ENCODE measurements at regions of chr7 and their contacts with region 1.

Region 1: DNA sequence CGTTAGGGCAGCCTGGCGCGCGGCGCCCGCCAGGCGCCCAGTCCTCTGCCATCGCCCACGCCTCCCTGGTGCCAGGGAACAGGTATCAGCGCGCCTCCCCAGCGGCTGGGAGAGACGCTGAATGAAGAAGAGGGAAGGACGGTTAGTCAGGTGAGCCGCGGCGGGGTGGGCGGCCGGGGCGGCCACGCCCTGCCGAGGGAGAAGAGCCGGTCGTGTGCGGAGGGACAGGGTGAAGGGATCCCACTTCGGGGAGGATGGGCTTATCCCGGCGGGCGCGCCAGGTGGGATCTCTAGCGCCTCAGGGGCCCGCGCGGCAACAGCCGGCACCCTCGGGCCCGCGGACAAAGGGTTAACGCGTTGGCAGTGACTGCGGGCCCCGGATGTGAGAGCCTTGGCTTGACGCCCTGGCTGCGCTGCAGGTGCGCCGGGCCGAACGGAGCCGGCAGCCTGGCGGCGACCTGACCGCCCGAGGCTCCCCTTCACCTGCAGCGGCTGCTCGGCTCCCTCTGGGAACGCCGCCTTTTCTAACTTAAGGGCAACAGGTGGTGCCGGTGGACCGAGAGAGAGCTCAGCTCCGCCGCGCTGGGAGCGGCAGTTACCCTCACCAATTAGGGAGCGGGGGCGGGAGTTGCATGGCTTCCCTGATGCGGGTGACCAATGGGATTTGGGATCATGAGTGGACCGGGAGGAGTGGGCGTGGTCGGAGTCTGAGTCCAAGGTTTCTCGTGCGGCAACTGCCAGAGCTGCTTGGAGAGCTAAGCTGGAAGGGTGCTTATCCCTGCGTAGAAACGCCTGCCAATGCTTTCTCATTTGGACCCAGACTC is at the start of gene ARL4A:
- DNase-seq: peak; percentile 92 to 99
- H3K4me3 ChIP-seq: peak within 1 kb of the TSS; percentile 96 to 99
- H3K27ac ChIP-seq: peak within 1 kb of the TSS; percentile 83 to 92
- H3K4me1 ChIP-seq: peaks cover 0 to 3% of the 10 kb centered on the region in 2 donors
- H3K27me3 ChIP-seq: no peaks in the 10 kb centered on the region
- CTCF ChIP-seq: peak; percentile 21 to 57 (median 47)
- total RNA-seq, gene ARL4A: 55.5 TPM

Region 2: GRCh38 chr7:12211054-12211710 is 475.9 kb before region 1 on chr7 and contains the start of gene TMEM106B:
- intact Hi-C with region 1: loop called (anchors 2 kb)
- DNase-seq: peak; percentile 86 to 98
- H3K4me3 ChIP-seq: peak within 1 kb of the TSS; percentile 73 to 88
- H3K27ac ChIP-seq: peak within 1 kb of the TSS; percentile 84 to 90
- H3K4me1 ChIP-seq: peaks cover 0 to 10% of the 10 kb centered on the region in 2 donors
- H3K27me3 ChIP-seq: no peaks in the 10 kb centered on the region
- CTCF ChIP-seq: no peak
- total RNA-seq, gene TMEM106B: 21.3 TPM

Region 3: DNA sequence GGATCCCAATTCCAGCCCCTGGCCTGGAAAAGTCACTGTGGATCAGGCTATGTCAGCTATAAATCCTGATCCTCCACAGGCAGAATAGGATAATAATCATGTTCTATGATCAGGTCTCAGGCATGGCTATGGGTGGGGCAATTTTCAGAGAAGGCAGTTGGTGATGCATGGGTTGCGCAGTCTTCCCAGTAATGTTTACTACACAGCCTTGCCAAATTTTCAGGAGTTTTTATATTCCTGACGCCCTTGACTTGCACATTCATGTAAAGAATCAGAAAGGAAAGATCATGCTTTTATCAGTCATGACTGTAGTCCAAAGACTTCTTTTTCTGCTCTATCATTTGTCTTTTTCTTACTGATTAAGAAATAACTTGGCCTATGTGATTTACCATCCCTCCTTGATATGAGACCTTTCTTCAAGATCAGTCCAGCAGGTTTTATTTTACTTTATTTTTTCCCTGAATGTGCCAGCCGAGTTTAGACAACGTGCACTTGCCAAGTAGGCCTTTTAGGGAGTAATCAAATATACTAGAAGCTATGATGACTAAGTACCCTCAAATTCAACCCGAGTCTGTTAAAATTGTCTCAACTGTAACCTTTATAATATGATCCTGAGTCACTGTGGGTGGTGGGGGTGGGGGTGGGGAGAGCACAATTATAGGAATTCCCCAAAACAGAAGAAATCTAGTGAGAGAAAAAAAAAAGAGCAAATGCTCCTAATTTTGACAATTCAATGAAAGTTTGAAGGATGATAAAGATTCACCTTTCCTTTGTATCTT is 32.2 kb after region 1 on chr7:
- intact Hi-C with region 1: loop called (anchors 2 kb)
- DNase-seq: no peak
- H3K4me3 ChIP-seq: no peak overlapping the region
- H3K27ac ChIP-seq: peak overlapping the region; percentile 78 to 82
- H3K4me1 ChIP-seq: peaks cover 7 to 15% of the 10 kb centered on the region in 2 donors
- H3K27me3 ChIP-seq: no peaks in the 10 kb centered on the region
- CTCF ChIP-seq: no peak

Region 4: DNA sequence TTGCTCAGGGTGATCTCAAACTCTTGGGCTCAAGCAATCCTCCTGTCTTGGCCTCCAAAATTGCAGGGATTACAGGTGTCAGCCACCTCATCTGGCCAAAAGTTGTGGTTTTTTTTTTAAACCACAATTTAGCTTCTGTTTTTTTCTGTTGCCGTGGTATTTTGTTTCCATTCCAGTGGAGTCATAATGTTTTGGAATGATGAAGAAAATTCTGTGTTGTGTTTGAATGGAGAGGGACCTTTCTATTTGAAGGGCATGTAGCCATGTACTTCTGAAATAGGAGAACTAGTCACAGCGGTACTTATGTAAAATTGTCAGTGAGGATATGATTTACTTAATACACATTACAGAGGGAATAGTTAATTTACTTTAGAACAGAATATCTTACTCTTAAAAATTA is 201.6 kb after region 1 on chr7:
- intact Hi-C with region 1: loop called (anchors 5 kb)
- DNase-seq: no peak
- H3K4me3 ChIP-seq: no peak overlapping the region
- H3K27ac ChIP-seq: peak overlapping the region; percentile 6 to 34
- H3K4me1 ChIP-seq: peaks cover 0 to 6% of the 10 kb centered on the region in 2 donors
- H3K27me3 ChIP-seq: no peaks in the 10 kb centered on the region
- CTCF ChIP-seq: no peak

Region 5: DNA sequence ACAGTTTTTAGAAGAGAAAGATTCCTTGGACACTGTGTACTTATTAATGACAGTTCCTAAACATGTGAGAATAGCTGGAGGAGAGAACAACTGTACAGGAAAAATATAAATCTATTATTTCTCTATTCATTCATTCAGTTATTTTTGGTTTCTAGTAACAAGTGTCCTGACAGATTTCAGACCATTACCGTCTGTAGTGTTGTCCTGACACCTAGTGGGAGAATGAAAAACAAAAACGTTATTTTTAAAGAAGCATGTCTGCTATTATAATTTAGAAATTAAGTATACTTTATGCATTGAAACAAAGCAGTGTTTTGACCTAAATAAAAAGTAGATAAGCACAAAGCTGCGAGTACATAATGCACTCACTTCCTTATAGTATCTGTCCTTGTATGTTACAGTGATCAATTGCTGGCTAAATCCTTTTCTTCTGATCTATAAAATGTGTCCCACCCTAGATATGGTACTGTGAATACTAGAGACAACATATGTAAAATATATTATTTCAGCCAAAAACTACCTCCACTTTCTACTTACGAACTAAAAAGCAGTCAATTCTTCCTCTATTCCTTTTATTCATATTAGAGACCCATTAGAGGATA is 575.9 kb after region 1 on chr7:
- intact Hi-C with region 1: loop called (anchors 2 kb)
- DNase-seq: no peak
- H3K4me3 ChIP-seq: no peak overlapping the region
- H3K27ac ChIP-seq: no peak overlapping the region
- H3K4me1 ChIP-seq: no peaks in the 10 kb centered on the region
- H3K27me3 ChIP-seq: no peaks in the 10 kb centered on the region
- CTCF ChIP-seq: peak; percentile 15 to 61 (median 52)

Region 6: DNA sequence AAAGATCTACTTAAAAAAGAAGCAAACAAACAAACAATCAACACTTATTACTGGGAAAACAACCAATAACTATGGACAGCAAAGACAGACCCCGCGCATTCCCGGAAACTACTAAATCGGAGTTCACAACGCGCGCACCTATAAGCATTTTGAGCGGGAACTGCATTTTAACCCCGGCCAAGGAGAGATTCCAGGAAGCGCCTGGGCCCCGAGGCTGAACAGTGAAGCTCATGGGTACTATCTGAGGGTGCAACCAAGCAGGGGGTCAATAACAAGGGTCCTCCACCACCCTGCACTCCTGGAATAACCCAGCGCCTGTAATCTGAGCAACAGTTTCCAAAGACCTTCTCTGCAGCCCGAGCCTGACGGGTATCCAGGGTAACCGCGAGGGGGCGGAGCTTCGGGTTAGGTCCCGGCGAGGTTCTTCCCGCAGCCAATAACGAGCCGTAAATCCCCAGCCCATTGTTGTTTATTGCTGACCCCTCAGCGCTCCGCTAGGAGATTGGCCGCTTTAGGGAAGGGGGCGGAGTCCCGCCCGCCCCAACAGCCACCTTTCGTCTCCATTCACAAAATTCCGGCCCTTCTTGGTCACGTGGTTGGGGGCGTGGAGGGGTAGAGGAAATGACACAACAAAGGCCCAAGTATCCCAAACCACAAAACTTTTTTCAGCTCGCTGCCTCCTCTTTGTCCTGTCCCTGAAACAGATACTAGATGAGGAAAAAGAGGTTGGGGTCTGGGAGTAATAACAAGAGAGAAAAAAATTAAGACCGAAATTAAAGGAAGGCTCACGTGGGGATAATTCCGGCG is 1304.1 kb after region 1 on chr7:
- intact Hi-C with region 1: loop called (anchors 2 kb)
- DNase-seq: peak; percentile 89 to 99
- H3K4me3 ChIP-seq: peak overlapping the region; percentile 79 to 94
- H3K27ac ChIP-seq: peak overlapping the region; percentile 91 to 93
- H3K4me1 ChIP-seq: peaks cover 0 to 6% of the 10 kb centered on the region in 2 donors
- H3K27me3 ChIP-seq: no peaks in the 10 kb centered on the region
- CTCF ChIP-seq: no peak

Measured in ascending aorta (tissue), 2 donors.